ENCODE measurements at regions of chr2 and their contacts with region 1.

Region 1: GRCh38 chr2:226791487-226792081 is 8.0 kb downstream of the IRS1 start:
- ATAC-seq: peak; percentile 84 to 93 (median 92)
- H3K4me3 ChIP-seq: peak overlapping the region; percentile 43 to 61 (median 52)
- H3K27ac ChIP-seq: peak overlapping the region; percentile 83 to 87
- H3K4me1 ChIP-seq: peaks cover 31 to 43% of the 10 kb centered on the region in 2 donors

Region 2: GRCh38 chr2:225889446-225889850 is 902.1 kb before region 1 on chr2:
- in situ Hi-C with region 1: loop called in 1 of 9 experiments (anchors 25 kb)
- ATAC-seq: peak in 7 of 8 experiments; percentile 43 to 94 (median 47)
- H3K4me3 ChIP-seq: no peak overlapping the region
- H3K27ac ChIP-seq: no peak overlapping the region
- H3K4me1 ChIP-seq: peaks cover 4 to 9% of the 10 kb centered on the region in 2 donors

Region 3: GRCh38 chr2:226030788-226031646 is 760.6 kb before region 1 on chr2:
- in situ Hi-C with region 1: loop called in 1 of 9 experiments (anchors 25 kb)
- ATAC-seq: peak; percentile 90 to 97 (median 92)
- H3K4me3 ChIP-seq: peak overlapping the region; percentile 41 to 56 (median 46)
- H3K27ac ChIP-seq: peak overlapping the region; percentile 92 to 97
- H3K4me1 ChIP-seq: peaks cover 12 to 14% of the 10 kb centered on the region in 2 donors

Region 4: GRCh38 chr2:226215902-226216503 is 575.6 kb before region 1 on chr2:
- in situ Hi-C with region 1: loop called in 1 of 9 experiments (anchors 25 kb)
- ATAC-seq: peak; percentile 85 to 98 (median 88)
- H3K4me3 ChIP-seq: no peak overlapping the region
- H3K27ac ChIP-seq: no peak overlapping the region
- H3K4me1 ChIP-seq: no peaks in the 10 kb centered on the region

Region 5: DNA sequence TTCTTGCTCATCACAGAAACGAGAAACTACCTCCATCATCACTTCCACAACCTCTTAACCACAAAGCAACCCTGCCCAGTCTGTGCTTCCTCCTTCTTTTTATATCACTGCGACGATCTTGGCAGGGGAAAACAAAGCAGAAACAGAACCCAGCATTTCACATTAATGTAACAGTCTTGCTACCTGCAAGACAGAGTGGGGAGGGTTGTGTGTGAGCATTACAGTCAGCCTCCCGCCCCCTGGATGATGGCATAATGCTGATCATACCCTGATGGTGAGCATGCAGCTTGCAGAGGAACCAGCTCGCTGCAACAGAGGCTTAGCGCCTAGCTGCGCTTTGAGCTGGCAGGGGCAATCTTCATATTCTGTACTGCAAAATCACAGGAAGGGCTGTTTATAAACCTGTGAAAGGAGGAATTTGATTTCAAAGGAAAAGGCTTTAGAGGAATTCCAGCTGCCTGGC is 368.1 kb before region 1 on chr2:
- in situ Hi-C with region 1: loop called in 1 of 9 experiments (anchors 25 kb)
- ATAC-seq: peak in 5 of 8 experiments; percentile 87 to 90 (median 88)
- H3K4me3 ChIP-seq: no peak overlapping the region
- H3K27ac ChIP-seq: peak overlapping the region in 1 of 2 donors; percentile 10
- H3K4me1 ChIP-seq: peaks cover 15 to 19% of the 10 kb centered on the region in 2 donors

Measured in motor neuron (in vitro differentiated cells).